ENCODE measurements at regions of chr2 and their contacts with region 1.

Region 1: GRCh38 chr2:145752091-145752806 is 1232.3 kb upstream of the ZEB2 start:
- DNase-seq: peak; percentile 50
- ATAC-seq: peak; percentile 85
- H3K4me3 ChIP-seq: no peak overlapping the region
- H3K27ac ChIP-seq: no peak overlapping the region
- H3K4me1 ChIP-seq: peaks cover 3 to 5% of the 10 kb centered on the region in 2 experiments; a peak in 3 of 4 replicates
- H3K27me3 ChIP-seq: no peaks in the 10 kb centered on the region
- CTCF ChIP-seq: peak; percentile 35 to 72 (median 68); a peak in 5 of 6 replicates
- POLR2A ChIP-seq: no peak
- RAD21 ChIP-seq: peak; percentile 77

Region 2: DNA sequence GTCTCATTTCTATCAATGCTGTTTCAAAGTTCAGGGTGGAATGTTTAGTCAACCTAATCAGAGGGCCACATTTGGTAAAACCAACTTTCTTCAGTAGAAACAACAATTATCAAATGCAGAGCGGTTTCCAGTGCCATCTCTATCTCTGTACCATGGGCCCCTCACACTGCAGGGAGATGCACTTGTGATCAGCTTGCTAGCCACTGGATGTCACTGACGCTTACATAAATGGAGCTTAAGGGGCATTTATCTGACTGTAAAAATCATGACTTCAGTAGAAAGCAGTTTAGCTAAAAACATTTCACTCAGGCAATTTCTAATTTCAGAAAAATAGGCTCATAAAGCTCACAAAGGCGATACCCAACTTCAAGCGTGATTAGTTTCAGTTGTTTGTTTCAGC is 1910.3 kb before region 1 on chr2:
- CTCF ChIA-PET with region 1: no interaction called
- POLR2A ChIA-PET with region 1: no interaction called
- RAD21 ChIA-PET with region 1: no interaction called
- intact Hi-C with region 1: loop called (anchors 5 kb)
- DNase-seq: no peak
- ATAC-seq: no peak
- H3K4me3 ChIP-seq: no peak overlapping the region
- H3K27ac ChIP-seq: no peak overlapping the region
- H3K4me1 ChIP-seq: no peaks in the 10 kb centered on the region
- H3K27me3 ChIP-seq: no peaks in the 10 kb centered on the region
- CTCF ChIP-seq: no peak; a peak in 1 of 6 replicates
- POLR2A ChIP-seq: no peak
- RAD21 ChIP-seq: peak; percentile 19; the same call in 1 of the 2 replicates

Region 3: GRCh38 chr2:144162652-144163051 is 1589.6 kb before region 1 on chr2:
- CTCF ChIA-PET with region 1: no interaction called
- POLR2A ChIA-PET with region 1: no interaction called
- RAD21 ChIA-PET with region 1: no interaction called
- intact Hi-C with region 1: loop called (anchors 2 kb)
- DNase-seq: peak; percentile 7
- ATAC-seq: peak; percentile 93
- H3K4me3 ChIP-seq: no peak overlapping the region
- H3K27ac ChIP-seq: no peak overlapping the region
- H3K4me1 ChIP-seq: no peaks in the 10 kb centered on the region
- H3K27me3 ChIP-seq: no peaks in the 10 kb centered on the region
- CTCF ChIP-seq: peak; percentile 38 to 77 (median 67); a peak in 5 of 6 replicates
- POLR2A ChIP-seq: no peak
- RAD21 ChIP-seq: peak; percentile 77

Region 4: GRCh38 chr2:145692971-145693478 is 59.2 kb before region 1 on chr2:
- CTCF ChIA-PET with region 1: no interaction called
- POLR2A ChIA-PET with region 1: no interaction called
- RAD21 ChIA-PET with region 1: no interaction called
- intact Hi-C with region 1: no loop called
- DNase-seq: no peak
- ATAC-seq: no peak
- H3K4me3 ChIP-seq: no peak overlapping the region
- H3K27ac ChIP-seq: no peak overlapping the region
- H3K4me1 ChIP-seq: no peaks in the 10 kb centered on the region
- H3K27me3 ChIP-seq: no peaks in the 10 kb centered on the region
- CTCF ChIP-seq: no peak
- POLR2A ChIP-seq: no peak
- RAD21 ChIP-seq: no peak

Region 5: DNA sequence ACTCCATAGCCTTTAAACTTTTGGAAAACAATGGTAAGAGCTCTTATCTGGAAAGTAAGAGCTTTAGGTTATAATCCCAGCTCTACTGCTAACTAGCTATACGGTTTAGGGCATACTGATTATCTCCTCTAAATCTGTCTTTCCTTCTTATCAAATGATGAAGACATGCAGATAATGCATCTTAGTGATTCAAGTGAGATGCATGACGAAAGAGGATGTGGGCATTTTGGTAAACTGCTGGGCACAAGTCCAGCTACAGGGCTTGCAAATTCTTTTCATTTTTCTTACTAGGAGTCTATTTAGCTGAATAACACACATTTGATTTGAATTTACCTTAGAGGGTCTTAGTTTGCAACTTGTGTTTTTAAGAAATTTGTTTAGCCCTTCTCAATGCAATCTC is 372.5 kb after region 1 on chr2:
- CTCF ChIA-PET with region 1: no interaction called
- POLR2A ChIA-PET with region 1: no interaction called
- RAD21 ChIA-PET with region 1: no interaction called
- intact Hi-C with region 1: no loop called
- DNase-seq: no peak
- ATAC-seq: no peak
- H3K4me3 ChIP-seq: no peak overlapping the region
- H3K27ac ChIP-seq: no peak overlapping the region
- H3K4me1 ChIP-seq: no peaks in the 10 kb centered on the region
- H3K27me3 ChIP-seq: no peaks in the 10 kb centered on the region
- CTCF ChIP-seq: no peak
- POLR2A ChIP-seq: no peak
- RAD21 ChIP-seq: no peak

Measured in HCT116 (cell line).